ENCODE measurements at regions of chr1 and their contacts with region 1.

Region 1: DNA sequence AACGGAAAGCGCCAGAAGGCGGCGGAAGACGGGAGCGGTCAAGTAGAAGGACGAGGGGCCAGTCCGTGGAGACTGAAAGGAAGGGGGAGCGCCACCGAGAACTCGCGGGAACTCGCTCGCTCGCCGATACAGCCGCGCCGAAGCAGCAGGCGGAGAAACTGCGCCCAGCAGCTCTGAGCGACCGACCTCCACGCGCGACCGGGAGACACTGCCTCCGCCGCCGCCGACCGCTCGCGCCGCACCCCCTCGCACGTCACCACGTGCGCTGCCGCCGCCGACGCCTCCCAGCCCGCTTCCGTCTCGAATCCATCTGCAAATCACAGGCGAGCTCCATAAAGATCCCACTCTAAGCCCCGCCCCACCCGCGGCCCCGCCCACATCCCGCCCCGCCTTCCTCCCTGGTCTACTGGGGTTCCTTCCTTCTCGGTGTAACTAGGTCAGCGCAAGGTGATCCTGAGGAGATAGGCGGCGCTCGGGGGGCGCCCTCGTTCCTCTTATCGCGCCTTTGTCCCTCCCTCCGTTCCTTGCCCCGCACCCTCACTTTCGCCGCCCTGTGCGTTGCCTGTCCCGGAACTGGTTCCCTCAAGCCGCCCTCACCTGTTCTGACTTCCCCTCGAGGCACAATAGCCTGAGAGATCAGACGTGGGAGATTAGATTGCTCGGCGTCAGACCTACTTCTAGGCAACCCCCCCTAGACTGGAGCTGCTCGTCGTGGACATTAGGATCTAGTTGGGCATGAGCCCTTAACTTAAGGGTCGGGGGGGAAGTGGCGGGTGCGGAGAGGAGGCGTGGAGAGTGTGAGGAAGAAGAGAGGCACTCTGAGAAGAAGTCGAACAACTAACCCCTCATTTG is at the start of gene IVNS1ABP:
- DNase-seq: peak; percentile 98
- total RNA-seq, gene IVNS1ABP: 116 TPM

Region 2: GRCh38 chr1:185488808-185489207 is 171.5 kb after region 1 on chr1:
- intact Hi-C with region 1: loop called (anchors 5 kb)
- DNase-seq: no peak

Region 3: DNA sequence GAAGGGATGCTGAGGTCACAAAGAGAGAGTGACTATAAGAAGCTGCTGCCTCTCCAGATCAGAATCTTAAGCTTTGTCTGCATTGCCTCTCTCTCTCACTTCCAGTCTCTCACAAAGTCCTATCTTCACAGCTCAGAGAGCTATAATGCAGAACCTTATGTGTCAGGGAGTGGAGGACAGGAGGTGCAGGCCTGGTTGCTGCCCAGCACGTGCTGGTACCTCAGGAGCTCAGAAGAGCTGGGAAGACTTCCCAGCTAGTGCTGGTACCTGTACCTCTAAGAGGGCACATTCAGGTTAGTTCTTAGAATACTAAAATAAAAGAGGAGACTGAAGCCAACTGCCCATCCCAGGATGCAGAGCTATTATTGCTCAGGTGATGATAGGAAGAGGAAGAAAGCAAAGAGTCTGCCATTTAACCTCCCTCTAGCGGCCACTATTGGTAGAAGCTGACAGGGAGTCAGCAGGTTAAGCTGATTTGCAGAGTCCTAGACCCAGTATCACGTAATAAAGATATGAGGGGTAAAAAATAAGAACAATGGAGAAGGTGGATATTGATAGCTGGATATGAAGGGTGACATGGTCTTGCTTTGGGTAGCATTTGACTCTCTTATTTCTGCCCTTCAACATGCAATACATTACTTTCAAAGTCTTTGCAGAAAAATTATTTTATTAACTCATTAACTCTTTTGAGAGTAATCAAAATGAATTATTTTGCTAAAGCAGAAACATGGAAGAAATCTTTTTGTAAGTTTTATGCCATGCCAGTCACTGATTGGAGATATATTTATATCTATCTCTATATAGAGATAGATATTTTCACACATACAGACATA is 278.8 kb after region 1 on chr1:
- intact Hi-C with region 1: loop called (anchors 10 kb)
- DNase-seq: no peak

Region 4: GRCh38 chr1:185646202-185646683 is 329.0 kb after region 1 on chr1:
- intact Hi-C with region 1: loop called (anchors 5 kb)
- DNase-seq: no peak

Region 5: GRCh38 chr1:185670187-185670627 is 352.9 kb after region 1 on chr1:
- intact Hi-C with region 1: loop called (anchors 5 kb)
- DNase-seq: no peak